Astrocyte of the cerebellum (primary cell): ENCODE measurements at regions of chr16 and their contacts with region 1.

Region 1: DNA sequence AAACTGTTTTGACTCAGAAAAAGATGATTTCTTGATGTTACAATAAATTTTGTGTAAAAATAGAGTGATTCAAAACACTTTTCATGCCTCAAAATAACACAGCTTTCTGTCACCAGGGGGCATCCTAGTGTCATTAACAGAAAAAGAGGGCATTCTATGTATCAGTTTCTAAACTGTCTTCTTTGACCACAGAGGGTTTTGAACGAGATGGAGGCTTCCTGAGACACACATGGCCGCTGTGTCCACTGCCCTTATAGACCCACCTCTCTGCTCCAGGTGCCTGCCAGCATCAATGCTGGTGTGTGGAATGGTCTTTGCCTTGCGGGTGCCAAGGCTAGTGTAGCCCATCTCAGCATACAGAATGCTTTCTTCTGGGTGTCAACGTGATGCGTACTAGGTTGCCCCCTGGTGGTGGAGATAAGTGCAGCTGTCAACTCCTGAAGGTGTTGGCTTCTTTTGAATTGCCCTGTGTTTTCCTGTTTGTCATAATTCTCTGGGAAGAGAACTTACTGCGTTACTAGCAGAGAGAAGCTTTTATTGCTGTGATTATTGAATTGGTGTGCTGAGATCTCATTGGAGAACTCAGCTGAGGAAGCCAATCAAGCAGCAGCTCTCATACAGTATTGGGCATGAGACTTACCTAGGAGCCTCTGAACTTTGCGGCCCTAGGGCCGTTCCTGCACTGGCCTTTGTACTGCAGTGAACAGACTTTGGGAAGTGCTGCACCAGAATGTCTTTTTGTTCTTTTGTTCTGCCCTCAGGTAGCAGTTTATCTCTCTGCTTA is 38.6 kb downstream of the USP10 start:
- DNase-seq: no peak
- H3K4me3 ChIP-seq: no peak overlapping the region
- CTCF ChIP-seq: peak; percentile 93

Region 2: DNA sequence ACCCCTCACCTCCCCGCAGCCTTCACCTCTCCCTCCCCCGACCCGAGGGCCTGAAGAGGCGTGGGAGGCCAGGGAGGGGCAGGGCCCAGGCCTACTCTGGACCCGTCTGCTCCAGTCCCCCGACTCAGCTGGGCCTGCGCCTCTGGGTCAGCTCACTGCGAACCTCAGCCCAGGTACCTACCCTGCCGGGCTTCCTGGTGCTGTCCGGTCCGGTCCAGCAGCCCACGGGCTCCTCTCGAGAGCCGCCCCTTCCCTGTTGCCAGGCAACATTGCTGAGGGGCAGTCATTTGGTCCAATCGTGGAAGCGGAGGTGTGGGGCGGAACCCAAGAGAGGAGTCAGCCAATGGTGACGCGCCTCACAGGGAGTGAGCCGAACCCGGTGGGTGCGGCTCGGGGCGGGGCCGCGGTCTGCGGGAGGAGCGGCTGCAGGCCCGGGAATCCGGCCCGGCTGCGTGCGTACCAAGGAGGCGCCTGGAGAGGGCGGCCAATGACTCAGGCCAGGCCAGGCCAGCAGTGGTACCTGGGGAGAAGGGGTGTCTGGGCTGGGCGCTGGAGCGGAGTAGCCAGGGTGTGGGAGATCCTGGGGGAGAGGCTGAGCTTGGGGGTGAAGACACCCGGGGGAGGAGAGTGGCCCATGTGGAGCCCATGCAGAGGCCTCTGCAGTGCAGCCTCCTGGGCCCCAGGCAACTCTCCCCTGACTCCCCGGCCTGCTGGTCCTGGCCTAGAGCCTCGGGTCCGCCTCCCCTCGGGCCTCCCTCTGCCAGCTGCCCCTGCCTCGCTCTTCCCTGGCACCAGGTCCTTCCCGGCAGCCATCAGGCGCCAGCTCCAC is 233.8 kb before region 1 on chr16 and contains the start of gene MEAK7:
- in situ Hi-C with region 1: loop called (anchors 25 kb)
- DNase-seq: peak; percentile 97
- H3K4me3 ChIP-seq: peak within 1 kb of the TSS; percentile 55
- CTCF ChIP-seq: no peak

Region 3: GRCh38 chr16:84947022-84947421 is 208.6 kb after region 1 on chr16:
- in situ Hi-C with region 1: loop called (anchors 10 kb)
- DNase-seq: no peak
- H3K4me3 ChIP-seq: no peak overlapping the region
- CTCF ChIP-seq: no peak